ENCODE measurements at regions of chr14 and their contacts with region 1.

Region 1: DNA sequence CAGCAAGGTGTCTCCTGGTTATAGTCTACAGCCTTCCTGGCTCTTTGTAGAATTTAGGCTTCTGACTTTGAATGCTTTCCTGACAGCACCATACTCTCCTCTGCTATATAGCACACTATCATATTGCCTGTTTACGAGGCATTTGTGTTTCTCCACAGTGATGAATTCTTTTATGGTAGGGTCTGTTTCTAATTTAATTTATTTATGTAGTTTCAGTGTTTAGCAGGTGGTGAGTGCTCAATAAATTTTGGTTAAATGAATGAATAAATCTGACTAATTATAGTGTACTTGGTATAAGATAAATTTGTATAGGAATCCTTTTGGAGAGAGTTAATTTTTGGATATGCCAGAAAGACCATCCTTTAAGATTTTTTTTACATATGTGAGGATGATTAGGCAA is 115.3 kb downstream of the RAD51B start:
- DNase-seq: no peak
- H3K4me3 ChIP-seq: no peak overlapping the region
- H3K27ac ChIP-seq: peak overlapping the region in 2 of 4 donors; percentile 58 to 72
- H3K4me1 ChIP-seq: peaks cover 0 to 51% (median 6%) of the 10 kb centered on the region in 3 donors
- H3K27me3 ChIP-seq: no peaks in the 10 kb centered on the region
- CTCF ChIP-seq: no peak
- POLR2A ChIP-seq: no peak

Region 2: DNA sequence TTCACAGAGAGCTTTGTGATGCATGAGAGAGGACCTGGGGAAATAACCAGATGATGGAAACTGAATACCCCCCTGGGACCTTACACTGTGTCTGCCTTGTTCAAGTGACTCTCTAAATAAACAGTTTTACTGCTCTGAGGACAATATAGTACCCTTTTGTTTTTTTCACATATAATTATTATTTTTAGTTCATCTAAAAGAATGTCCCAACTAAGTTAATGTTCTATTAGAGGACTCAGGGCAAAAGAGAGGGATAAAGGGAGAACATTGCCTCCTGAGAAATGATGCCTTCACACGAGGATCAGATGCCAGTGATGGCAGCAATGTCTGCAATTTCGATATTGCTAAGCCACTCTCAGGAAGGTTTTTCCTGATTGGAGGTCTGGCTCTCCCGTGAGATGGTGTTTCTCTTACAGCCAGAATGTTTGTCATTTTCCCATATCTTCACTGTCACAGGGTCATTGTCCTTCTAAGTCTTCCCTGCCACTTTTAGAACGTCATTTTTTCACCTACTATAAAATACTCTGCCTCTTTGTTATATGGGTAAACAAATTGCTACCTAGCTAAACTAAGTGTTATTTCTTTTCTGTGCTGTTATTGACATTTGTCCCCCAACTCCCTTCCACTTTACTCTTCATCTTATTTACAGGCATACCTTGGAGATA is 86.3 kb after region 1 on chr14:
- intact Hi-C with region 1: no loop called
- DNase-seq: no peak
- H3K4me3 ChIP-seq: no peak overlapping the region
- H3K27ac ChIP-seq: no peak overlapping the region
- H3K4me1 ChIP-seq: peaks cover 0 to 17% (median 0%) of the 10 kb centered on the region in 3 donors
- H3K27me3 ChIP-seq: no peaks in the 10 kb centered on the region
- CTCF ChIP-seq: no peak
- POLR2A ChIP-seq: no peak

Region 3: GRCh38 chr14:68824517-68825347 is 889.9 kb after region 1 on chr14:
- intact Hi-C with region 1: loop called (anchors 5 kb)
- DNase-seq: no peak
- H3K4me3 ChIP-seq: peak overlapping the region in 1 of 4 donors; percentile 40
- H3K27ac ChIP-seq: no peak overlapping the region
- H3K4me1 ChIP-seq: peaks cover 22 to 50% (median 27%) of the 10 kb centered on the region in 3 donors
- H3K27me3 ChIP-seq: no peaks in the 10 kb centered on the region
- CTCF ChIP-seq: peak; percentile 61 to 79 (median 74)
- POLR2A ChIP-seq: no peak